AG04450 (cell line): ENCODE measurements at regions of chr9 and their contacts with region 1.

Region 1: GRCh38 chr9:134171316-134172197 is 7.2 kb upstream of the RNU6ATAC start:
- DNase-seq: no peak
- H3K4me3 ChIP-seq: no peak overlapping the region
- H3K27ac ChIP-seq: no peak overlapping the region
- H3K27me3 ChIP-seq: peaks cover 7% of the 10 kb centered on the region
- CTCF ChIP-seq: no peak

Region 2: GRCh38 chr9:134185536-134186011 is 14.0 kb after region 1 on chr9:
- CTCF ChIA-PET with region 1: interaction called, 12 read pairs
- POLR2A ChIA-PET with region 1: no interaction called
- DNase-seq: no peak
- H3K4me3 ChIP-seq: no peak overlapping the region
- H3K27ac ChIP-seq: no peak overlapping the region
- H3K27me3 ChIP-seq: peaks cover 31% of the 10 kb centered on the region
- CTCF ChIP-seq: no peak

Region 3: DNA sequence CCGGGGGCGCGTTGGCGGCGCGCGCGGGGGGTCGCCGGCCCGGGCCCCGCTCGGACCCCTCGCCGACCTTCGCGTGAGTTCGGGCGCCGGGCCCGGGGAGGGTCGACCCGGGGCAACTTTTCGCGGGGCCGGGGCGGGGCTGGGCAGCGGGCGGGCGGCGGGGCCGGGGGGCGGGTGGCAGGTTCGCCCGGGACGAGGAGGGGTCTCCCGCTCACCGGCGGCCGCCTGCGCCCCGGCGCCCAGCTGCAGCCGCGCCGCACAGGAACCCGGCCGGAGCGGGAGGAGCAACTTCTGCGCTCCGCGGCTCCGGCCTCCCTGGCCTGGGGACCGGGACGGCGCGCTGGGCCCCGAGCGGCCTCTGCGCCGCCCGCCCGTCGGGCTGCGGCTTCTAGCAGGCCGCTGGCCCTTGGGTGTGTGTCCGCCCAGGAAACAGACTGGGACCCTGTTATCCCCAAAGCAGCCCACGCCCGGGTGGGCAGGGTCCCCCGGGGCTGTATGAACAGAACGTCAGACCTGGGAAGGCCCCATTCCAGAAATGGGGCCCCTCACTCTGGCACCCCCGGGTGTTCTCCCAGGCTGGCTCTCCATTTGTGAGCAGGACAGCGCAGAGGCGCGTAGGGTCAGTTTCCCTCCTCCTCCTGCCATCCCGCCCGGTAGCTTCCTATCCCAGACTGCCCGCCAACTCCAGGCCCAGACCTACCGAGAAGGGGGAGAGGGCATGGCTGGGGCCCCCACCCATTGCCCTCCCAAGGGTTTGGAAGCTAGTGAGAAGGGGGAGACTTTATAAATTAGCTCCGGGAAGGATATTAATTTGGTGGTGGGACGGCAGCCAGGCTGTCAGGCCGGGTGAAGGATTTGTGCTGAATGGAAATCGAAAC is 155.4 kb after region 1 on chr9:
- CTCF ChIA-PET with region 1: interaction called, 22 read pairs
- POLR2A ChIA-PET with region 1: no interaction called
- DNase-seq: no peak
- H3K4me3 ChIP-seq: peak overlapping the region; percentile 68
- H3K27ac ChIP-seq: peak overlapping the region; percentile 11
- H3K27me3 ChIP-seq: no peaks in the 10 kb centered on the region
- CTCF ChIP-seq: no peak

Region 4: DNA sequence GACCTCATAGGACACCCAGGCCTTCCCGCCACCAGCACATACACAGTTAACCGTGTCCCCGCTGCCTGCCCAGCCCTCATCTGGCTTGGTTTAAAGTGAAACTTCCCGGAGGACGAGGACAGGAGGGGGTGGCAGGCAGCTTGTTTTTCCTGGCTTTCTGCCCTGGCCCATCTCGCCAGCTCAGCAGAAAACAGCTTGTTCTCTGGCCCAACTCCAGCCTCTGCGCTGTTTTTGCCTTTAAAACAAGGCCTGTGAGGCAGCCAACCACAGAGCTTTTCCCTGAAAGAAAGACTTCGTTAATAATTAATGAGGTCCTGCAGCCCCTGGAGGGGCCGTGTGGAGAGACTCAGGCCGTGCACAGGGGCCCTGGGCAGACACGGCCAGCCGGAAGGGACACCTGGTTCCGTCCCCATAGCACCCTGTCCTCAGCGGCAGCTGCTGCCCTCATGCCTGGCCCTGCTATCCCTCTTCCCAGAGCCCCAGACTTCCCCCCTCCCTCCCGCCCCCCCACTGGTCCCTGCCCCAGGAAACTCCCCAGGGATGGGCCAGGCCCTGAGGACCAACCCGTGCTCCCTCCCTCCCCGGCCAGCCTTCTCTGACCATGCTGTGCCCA is 263.4 kb after region 1 on chr9:
- CTCF ChIA-PET with region 1: interaction called, 28 read pairs
- POLR2A ChIA-PET with region 1: interaction called, 3 read pairs
- DNase-seq: peak; percentile 92
- H3K4me3 ChIP-seq: no peak overlapping the region
- H3K27ac ChIP-seq: peak overlapping the region; percentile 68
- H3K27me3 ChIP-seq: no peaks in the 10 kb centered on the region
- CTCF ChIP-seq: no peak

Region 5: DNA sequence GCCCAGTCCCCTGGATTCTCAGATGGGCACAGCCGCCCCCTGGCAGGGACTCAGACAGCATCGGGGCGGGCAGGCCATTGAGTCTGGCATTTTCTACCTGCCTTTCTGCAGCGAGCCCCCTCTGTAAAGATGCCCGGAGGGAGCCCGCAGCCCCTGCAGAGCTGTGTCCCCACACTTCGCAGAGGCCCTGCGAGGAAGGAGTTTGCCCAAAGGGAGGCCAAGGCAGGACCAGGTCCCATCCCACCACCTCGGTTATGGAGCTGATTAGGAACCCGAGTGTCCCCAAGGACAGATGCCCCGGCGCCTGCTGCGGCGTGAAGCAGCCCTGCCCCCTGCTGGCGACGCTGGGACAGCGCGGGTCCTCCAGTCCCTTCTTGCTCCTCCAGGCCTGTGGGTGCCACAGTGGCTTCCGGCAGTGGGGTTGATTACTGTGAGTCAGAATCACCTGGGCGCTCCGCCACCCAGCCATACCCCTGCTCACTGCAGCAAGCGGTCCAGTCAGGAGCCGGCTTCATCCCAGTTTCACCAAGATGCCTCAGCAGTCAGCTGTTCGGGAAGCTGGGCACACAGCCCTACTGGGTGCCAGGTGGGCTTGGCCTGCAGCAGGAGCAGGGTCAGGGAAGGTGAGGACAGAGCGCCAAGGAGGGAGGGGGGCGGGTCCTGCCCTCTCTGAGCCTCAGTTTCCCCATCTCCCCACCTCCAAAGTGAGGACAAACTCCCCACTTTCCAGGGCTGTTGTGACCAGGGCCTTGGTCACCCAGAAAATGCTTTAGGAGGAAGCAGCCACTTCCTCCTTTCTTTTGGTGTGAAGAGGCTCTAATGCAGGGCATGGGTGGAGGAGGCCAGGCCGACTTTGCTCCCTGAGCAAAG is 271.8 kb after region 1 on chr9:
- CTCF ChIA-PET with region 1: interaction called, 96 read pairs
- POLR2A ChIA-PET with region 1: interaction called, 5 read pairs
- DNase-seq: peak; percentile 78
- H3K4me3 ChIP-seq: no peak overlapping the region
- H3K27ac ChIP-seq: no peak overlapping the region
- H3K27me3 ChIP-seq: peaks cover 3% of the 10 kb centered on the region
- CTCF ChIP-seq: peak; percentile 95